Right ventricle myocardium inferior (tissue), 1 donor: ENCODE measurements at regions of chr2 and their contacts with region 1.

Region 1: DNA sequence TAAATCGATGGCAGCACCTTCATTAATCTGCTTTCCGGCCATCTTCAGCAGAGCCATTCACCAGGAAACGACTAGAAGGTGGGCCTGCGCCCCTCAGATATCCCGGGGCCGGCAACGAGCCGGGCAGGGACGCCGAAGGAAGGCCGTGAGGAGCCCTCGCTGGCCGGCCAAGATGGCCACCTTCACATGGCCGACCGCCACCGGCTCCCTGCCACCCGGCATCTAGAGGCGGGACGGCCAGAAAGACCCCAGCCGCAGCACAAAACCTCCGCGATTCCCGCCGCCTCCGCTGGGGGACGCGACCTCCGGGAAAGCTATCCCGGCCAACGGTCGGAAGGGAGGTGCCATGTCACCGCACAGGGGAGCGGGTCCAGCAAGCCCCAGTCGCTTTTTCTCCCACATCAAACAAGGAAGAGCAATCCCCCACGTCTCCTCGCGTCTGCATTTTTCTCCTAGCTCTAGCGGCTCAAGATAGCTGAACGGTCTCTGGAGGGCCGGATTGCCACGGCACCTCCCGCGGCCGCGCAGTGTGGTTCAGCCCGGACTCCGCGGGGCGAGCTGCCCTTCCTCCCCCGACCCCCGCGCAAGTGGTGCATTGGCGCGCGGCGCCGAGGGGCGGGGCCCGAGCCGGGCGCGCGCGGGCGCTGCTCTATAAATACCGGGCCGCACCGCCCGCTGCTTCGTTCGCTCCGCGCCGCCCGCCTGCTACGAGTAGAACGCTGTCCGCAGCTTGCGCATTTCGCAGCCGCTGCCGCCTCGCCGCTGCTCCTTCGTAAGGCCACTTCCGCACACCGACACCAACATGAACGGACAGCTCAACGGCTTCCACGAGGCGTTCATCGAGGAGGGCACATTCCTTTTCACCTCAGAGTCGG is at the start of gene MAT2A:
- DNase-seq: peak; percentile 96
- ATAC-seq: peak; percentile 93
- total RNA-seq, gene MAT2A: 118 TPM

Region 2: DNA sequence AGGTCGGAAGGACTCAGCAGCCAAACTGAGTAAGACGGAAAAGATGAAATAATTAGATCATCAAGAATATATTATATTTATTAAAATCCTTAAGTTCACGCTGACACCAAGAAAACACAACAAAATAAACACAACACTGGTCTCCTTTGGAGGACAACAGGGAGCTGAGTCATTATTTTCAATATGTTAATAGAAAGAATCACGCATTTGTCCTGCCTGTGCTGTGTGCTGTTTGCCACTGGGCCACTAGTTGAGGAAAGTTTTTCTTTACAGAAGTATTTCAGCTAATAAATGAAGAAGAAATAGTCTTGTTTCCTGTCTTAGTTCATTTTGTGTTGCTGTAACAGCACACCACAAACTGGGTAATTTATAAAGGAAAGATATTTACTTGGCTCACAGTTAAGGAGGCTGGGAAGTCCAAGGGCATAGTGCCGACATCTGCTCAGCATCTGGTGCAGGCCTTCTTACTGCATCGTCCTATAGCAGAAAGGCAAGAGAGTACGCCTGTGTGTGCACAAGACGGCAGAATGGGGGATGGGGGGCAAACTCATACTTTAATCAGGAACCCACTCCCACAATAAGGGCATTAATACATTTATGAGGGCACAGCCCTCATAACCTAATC is 317.5 kb before region 1 on chr2:
- intact Hi-C with region 1: no loop called
- DNase-seq: no peak
- ATAC-seq: peak; percentile 85

Region 3: DNA sequence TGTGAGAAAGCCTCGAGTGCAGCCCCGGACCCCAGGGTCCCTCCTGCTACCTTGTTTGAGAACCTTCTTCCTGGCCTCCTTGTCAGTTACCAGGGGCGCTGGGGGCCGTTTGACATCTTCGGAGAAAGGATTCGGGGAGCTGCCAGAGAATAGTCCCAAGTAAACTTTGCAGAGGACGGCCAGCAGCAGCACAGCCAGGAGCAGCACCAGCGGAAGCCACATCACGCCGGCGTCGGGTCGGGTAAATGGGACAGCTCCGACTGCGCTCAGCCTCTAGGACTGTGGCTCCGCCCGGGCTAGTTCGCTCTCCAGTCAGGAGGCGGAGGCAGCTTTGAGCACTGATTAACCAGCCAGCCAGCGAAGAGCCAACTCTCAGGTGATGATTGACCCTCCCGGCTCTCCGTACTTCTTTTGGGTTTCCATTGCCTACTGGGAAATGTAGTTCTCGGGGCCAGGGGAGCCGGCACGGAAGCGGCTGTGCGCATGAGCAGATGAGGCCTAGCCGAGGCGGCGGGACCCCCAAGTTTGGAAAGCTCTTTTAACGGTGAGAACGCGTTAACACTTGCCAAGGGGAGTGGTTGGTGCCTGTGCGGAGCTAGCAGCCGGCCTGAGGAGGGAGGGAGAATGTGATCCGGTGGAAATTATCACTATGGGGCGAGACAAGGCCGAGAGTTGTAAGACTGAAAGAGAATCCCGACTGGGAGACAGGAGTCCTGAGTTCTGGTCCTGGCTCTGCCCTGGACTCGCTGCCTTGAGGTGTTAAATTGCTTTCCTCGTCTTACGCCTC is 184.2 kb before region 1 on chr2 and contains the starts of genes ELMOD3 and RETSAT:
- intact Hi-C with region 1: loop called (anchors 10 kb)
- DNase-seq: peak; percentile 97
- ATAC-seq: peak; percentile 99
- total RNA-seq, gene ELMOD3: 10.2 TPM
- total RNA-seq, gene RETSAT: 44.8 TPM

Region 4: GRCh38 chr2:85437488-85438284 is 101.0 kb before region 1 on chr2:
- intact Hi-C with region 1: loop called (anchors 1 kb)
- DNase-seq: peak; percentile 96
- ATAC-seq: peak; percentile 82

Region 5: GRCh38 chr2:85501248-85501647 is 37.5 kb before region 1 on chr2:
- intact Hi-C with region 1: loop called (anchors 2 kb)
- DNase-seq: no peak
- ATAC-seq: peak; percentile 17

Region 6: GRCh38 chr2:85514323-85514722 is 24.4 kb before region 1 on chr2:
- intact Hi-C with region 1: no loop called
- DNase-seq: no peak
- ATAC-seq: no peak

Region 7: DNA sequence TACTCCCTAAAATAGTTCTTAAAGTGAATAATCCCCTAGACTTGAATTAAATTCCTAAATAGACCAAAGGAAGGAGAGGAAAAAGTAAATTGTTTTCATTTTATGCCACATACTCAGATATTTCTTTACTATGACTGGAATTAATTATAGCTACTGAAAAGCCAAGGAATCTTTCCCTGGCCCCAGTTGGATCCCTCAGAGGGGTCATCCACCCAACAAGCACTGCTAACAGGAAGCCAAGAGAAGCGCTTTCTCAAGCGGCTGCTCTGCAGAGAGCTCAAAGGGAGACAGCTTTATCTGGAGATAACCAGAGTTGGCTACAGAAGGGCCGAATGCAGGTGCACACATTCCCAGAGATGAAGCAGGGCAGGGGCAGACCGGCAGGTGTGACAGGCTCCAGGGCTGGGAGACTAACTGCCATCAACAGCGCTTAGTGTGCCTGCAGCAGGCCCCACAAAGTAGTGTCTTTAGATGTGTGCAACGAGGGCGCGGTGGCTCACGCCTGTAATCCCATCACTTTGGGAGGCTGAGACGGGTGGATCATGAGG is 515.9 kb after region 1 on chr2:
- intact Hi-C with region 1: no loop called
- DNase-seq: no peak
- ATAC-seq: no peak